Activated CD8-positive, alpha-beta T cell treated with anti-CD3 and anti-CD28 coated beads for 36 hours (primary cell): ENCODE measurements at regions of chr6 and their contacts with region 1.

Region 1: GRCh38 chr6:38493931-38494547 is 145.7 kb downstream of the BTBD9 start:
- DNase-seq: peak; percentile 92
- ATAC-seq: no peak
- H3K4me3 Mint-ChIP-seq: no peak overlapping the region
- H3K27ac Mint-ChIP-seq: no peak overlapping the region
- H3K4me1 Mint-ChIP-seq: peaks cover 3% of the 10 kb centered on the region
- H3K27me3 Mint-ChIP-seq: no peaks in the 10 kb centered on the region
- CTCF ChIP-seq: peak; percentile 98

Region 2: DNA sequence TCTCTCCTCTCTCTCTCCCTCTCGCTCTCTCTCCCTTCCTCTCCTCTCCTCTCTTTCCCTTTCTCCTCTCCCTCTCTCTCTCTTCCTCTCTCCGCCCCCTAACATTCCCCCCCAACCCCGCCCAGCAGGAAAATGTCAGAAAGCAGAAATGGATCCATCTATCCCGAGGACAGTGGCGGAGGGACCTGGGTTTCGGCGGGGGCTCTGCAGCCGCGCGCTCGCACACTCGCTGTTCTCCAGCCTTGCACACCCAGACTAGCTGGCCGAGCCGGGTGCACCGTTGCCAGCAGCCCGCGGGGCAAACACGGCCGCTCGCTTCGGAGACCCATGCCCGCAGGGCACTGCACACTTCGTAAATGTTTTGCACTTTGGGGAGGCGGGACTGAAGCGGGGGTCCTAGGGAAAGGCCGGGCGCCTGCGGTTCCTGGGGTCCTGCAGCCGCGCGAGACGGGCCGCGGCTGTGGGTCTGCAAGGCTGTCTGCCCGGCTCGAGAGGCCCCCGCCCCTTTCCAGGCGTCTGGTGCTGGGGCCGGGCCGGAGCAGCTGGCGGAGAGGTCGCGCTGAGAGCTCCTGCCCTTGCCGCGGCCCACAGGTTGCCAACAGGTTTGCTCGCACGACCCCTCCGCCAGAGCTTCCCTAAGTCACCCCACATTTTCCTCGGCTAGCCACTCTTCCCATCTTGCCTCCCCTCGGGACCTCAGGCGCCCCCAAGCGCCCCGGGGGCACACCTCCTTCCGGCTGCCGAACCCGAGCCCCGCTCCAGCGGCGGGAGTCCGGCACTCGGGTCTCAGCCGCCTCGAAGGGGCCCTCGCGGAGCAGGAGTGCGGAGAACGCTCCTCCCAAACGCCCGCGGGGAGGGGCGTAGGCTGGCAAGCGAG is 795.5 kb before region 1 on chr6:
- CTCF ChIA-PET with region 1: interaction called, 10 read pairs
- POLR2A ChIA-PET with region 1: no interaction called
- intact Hi-C with region 1: loop called (anchors 5 kb)
- DNase-seq: peak; percentile 68
- ATAC-seq: peak; percentile 34
- H3K4me3 Mint-ChIP-seq: peak overlapping the region; percentile 87
- H3K27ac Mint-ChIP-seq: peak overlapping the region; percentile 92
- H3K4me1 Mint-ChIP-seq: peaks cover 15% of the 10 kb centered on the region
- H3K27me3 Mint-ChIP-seq: peaks cover 33% of the 10 kb centered on the region
- CTCF ChIP-seq: no peak

Region 3: DNA sequence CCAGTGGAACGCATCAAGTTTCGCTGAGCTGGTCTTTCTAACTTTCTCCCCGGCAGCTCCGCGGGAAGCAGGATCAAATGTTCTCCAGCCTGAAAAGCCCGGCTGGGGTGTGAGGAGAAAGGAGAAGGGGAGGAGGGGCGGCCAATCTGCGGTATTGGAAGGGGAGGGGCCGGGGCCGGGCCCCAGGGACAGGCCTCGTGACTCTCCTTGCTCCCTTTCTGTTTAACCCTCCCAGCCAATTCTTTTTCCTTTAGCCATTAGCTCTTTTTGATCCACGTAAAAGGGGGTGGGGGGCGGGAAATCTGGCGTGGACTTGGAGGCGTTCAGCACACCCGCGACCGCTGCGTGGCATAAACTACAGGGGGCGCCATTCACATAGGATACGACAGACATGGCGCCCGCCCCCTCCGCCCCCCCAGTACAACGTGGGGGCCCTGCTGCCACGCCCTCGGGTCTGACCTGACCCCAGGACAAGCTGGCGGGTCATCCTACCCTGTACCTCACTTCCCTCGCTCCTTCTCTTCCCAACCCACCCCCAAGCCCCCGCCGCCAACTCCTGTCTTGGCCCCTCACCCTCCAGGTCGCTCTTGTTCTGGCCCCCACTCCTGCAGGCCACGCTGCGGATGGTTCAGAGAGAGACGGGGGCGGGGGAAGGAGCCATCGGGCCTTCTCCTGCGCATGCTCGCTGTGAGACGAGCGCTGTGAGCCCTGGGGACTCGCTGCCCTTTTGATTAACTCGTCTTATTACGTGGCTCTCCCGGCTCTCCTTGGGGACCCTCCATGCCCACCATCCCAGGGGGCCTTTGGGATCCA is 788.6 kb before region 1 on chr6:
- CTCF ChIA-PET with region 1: interaction called, 10 read pairs
- POLR2A ChIA-PET with region 1: interaction called, 3 read pairs
- intact Hi-C with region 1: no loop called
- DNase-seq: peak; percentile 85
- ATAC-seq: peak; percentile 88
- H3K4me3 Mint-ChIP-seq: peak overlapping the region; percentile 62
- H3K27ac Mint-ChIP-seq: peak overlapping the region; percentile 78
- H3K4me1 Mint-ChIP-seq: peaks cover 8% of the 10 kb centered on the region
- H3K27me3 Mint-ChIP-seq: peaks cover 4% of the 10 kb centered on the region
- CTCF ChIP-seq: peak; percentile 86

Region 4: DNA sequence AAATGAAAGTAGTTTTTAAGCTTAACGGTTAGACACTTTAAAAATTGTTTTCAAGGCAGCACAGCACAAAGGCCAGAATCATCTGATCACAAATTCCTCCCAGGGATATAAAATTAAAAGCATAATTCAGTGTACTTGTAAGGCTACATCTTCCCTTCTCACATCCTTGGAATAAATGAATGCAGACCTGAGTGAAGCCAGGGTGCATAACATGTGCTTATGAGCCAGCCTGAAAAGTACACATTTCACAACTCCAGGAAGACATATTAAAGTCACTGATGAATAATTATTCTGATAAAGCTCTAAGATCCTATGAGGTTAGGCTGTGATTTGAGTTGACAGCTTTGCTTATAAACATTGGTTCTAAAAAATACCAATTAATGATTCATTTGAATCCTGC is 17.9 kb before region 1 on chr6:
- CTCF ChIA-PET with region 1: interaction called, 33 read pairs
- POLR2A ChIA-PET with region 1: no interaction called
- intact Hi-C with region 1: no loop called
- DNase-seq: no peak
- ATAC-seq: no peak
- H3K4me3 Mint-ChIP-seq: no peak overlapping the region
- H3K27ac Mint-ChIP-seq: no peak overlapping the region
- H3K4me1 Mint-ChIP-seq: peaks cover 6% of the 10 kb centered on the region
- H3K27me3 Mint-ChIP-seq: no peaks in the 10 kb centered on the region
- CTCF ChIP-seq: no peak

Region 5: GRCh38 chr6:38483526-38483925 is 10.5 kb before region 1 on chr6:
- CTCF ChIA-PET with region 1: interaction called, 33 read pairs
- POLR2A ChIA-PET with region 1: no interaction called
- intact Hi-C with region 1: no loop called
- DNase-seq: no peak
- ATAC-seq: no peak
- H3K4me3 Mint-ChIP-seq: no peak overlapping the region
- H3K27ac Mint-ChIP-seq: no peak overlapping the region
- H3K4me1 Mint-ChIP-seq: no peaks in the 10 kb centered on the region
- H3K27me3 Mint-ChIP-seq: no peaks in the 10 kb centered on the region
- CTCF ChIP-seq: no peak

Region 6: DNA sequence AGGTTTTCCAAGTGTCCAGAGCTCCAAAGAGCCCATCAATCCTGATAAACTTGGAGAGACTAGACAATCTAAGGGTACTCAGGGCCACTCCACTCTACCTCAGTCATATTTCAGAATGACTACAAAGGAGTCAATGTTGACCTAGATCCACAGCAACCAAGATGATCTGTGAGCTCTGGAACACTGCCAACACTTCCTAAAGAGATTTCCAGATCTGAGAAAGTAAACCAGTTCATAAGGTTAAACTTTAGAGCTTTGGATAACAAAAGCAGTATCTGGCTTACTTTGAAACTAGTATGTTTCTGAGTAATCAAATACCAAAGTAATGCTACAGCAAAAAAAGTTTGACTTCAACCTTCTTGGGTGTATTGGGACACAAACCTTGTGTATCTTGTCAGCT is 23.0 kb after region 1 on chr6:
- CTCF ChIA-PET with region 1: interaction called, 10 read pairs
- POLR2A ChIA-PET with region 1: no interaction called
- intact Hi-C with region 1: no loop called
- DNase-seq: no peak
- ATAC-seq: no peak
- H3K4me3 Mint-ChIP-seq: no peak overlapping the region
- H3K27ac Mint-ChIP-seq: no peak overlapping the region
- H3K4me1 Mint-ChIP-seq: peaks cover 16% of the 10 kb centered on the region
- H3K27me3 Mint-ChIP-seq: no peaks in the 10 kb centered on the region
- CTCF ChIP-seq: no peak

Region 7: DNA sequence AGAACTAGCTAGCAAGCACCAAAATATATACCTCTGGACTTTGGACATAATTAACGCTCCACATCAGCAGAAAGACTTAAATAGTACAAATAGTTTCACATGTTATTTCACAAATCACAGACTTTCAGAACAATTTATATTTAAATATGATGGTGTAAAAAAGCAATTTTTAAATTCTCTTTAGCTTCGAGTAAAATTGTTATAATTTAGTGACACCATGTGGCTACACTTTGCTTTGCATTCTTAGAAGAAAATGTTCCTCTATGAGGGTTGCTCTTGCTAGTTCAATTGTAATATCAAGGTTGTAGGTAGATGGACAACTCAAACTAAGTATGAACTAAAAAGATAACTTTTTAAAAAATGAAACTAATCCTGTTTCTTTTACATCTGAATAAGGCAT is 76.7 kb after region 1 on chr6:
- CTCF ChIA-PET with region 1: interaction called, 16 read pairs
- POLR2A ChIA-PET with region 1: no interaction called
- intact Hi-C with region 1: no loop called
- DNase-seq: no peak
- ATAC-seq: no peak
- H3K4me3 Mint-ChIP-seq: no peak overlapping the region
- H3K27ac Mint-ChIP-seq: no peak overlapping the region
- H3K4me1 Mint-ChIP-seq: peaks cover 23% of the 10 kb centered on the region
- H3K27me3 Mint-ChIP-seq: no peaks in the 10 kb centered on the region
- CTCF ChIP-seq: peak; percentile 40